Activated CD8-positive, alpha-beta T cell treated with anti-CD3 and anti-CD28 coated beads for 36 hours (primary cell): ENCODE measurements at regions of chr1 and their contacts with region 1.

Region 1: GRCh38 chr1:37486680-37487618 is 12.6 kb downstream of the ZC3H12A start:
- DNase-seq: peak; percentile 85
- ATAC-seq: peak; percentile 88
- H3K4me3 Mint-ChIP-seq: no peak overlapping the region
- H3K27ac Mint-ChIP-seq: peak overlapping the region; percentile 75
- H3K4me1 Mint-ChIP-seq: peaks cover 17% of the 10 kb centered on the region
- H3K27me3 Mint-ChIP-seq: no peaks in the 10 kb centered on the region
- CTCF ChIP-seq: peak; percentile 99

Region 2: DNA sequence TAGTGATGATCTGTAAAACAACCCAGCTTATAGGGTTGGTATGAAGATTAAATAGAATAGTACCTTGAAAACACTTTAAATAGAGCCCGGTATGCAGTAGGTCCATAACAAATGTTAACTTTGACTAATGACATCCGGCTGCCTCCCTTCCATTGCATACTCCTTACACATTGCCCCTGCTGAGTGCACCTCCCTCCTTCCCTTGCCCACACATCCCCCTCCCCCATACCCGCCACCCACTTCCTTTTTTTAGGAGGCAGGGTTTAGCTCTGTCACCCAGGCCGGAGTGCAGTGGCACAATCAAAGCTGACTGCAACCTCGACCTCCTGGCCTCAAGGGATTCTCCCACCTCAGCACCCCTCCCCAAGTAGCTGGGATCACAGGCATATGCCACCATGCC is 37.0 kb before region 1 on chr1:
- CTCF ChIA-PET with region 1: interaction called, 380 read pairs
- POLR2A ChIA-PET with region 1: interaction called, 12 read pairs
- intact Hi-C with region 1: loop called (anchors 2 kb)
- DNase-seq: peak; percentile 69
- ATAC-seq: peak; percentile 73
- H3K4me3 Mint-ChIP-seq: no peak overlapping the region
- H3K27ac Mint-ChIP-seq: peak overlapping the region; percentile 5
- H3K4me1 Mint-ChIP-seq: peaks cover 11% of the 10 kb centered on the region
- H3K27me3 Mint-ChIP-seq: no peaks in the 10 kb centered on the region
- CTCF ChIP-seq: no peak

Region 3: DNA sequence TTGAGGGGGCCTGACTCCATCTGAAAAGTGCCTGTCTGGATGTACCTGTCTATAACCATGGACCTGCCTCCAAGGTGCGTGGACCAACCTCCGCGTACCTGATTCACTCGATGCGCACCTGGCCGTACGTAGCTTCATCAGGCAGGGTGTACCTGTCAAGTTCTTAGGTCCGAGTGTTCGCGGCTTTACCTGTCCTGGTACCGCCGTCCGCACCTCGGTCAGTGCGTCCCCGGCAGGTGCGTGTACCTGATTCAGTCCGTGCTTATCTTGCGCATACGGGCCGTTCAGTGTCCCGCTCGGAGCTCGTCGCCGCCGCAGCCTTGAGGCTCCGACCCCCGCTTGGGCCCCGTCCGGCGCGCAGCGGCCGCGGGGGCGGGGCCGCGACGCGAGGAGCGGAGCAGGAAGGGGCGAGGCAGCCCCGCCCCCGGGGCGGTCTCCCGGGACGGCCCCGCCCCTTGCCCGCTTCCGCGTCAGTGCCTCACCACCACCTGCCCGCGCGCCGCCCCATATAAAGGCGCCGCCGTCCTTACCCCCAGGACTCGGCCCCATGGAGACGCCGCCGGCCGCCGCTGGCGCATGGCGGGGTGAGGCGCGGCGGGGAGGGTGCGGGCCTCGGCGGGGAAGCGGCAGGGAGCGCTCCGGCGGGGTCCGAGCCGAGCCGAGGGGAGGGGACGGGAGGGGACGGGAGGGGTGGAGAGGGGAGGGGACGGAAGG is 12.7 kb before region 1 on chr1 and contains the start of gene ZC3H12A:
- CTCF ChIA-PET with region 1: interaction called, 112 read pairs
- POLR2A ChIA-PET with region 1: interaction called, 45 read pairs
- intact Hi-C with region 1: no loop called
- DNase-seq: peak; percentile 93
- ATAC-seq: peak; percentile 62
- H3K4me3 Mint-ChIP-seq: peak within 1 kb of the TSS; percentile 90
- H3K27ac Mint-ChIP-seq: peak within 1 kb of the TSS; percentile 99
- H3K4me1 Mint-ChIP-seq: peaks cover 37% of the 10 kb centered on the region
- H3K27me3 Mint-ChIP-seq: no peaks in the 10 kb centered on the region
- CTCF ChIP-seq: no peak
- total RNA-seq, gene ZC3H12A: 20.4 to 20.5 TPM

Region 4: GRCh38 chr1:37509181-37509580 is 22.2 kb after region 1 on chr1:
- CTCF ChIA-PET with region 1: interaction called, 37 read pairs
- POLR2A ChIA-PET with region 1: interaction called, 5 read pairs
- intact Hi-C with region 1: no loop called
- DNase-seq: no peak
- ATAC-seq: no peak
- H3K4me3 Mint-ChIP-seq: no peak overlapping the region
- H3K27ac Mint-ChIP-seq: peak overlapping the region; percentile 22
- H3K4me1 Mint-ChIP-seq: peaks cover 36% of the 10 kb centered on the region
- H3K27me3 Mint-ChIP-seq: no peaks in the 10 kb centered on the region
- CTCF ChIP-seq: no peak

Region 5: GRCh38 chr1:37682334-37682987 is 195.5 kb after region 1 on chr1:
- CTCF ChIA-PET with region 1: interaction called, 10 read pairs
- POLR2A ChIA-PET with region 1: interaction called, 4 read pairs
- intact Hi-C with region 1: no loop called
- DNase-seq: peak; percentile 90
- ATAC-seq: peak; percentile 80
- H3K4me3 Mint-ChIP-seq: no peak overlapping the region
- H3K27ac Mint-ChIP-seq: peak overlapping the region; percentile 63
- H3K4me1 Mint-ChIP-seq: peaks cover 8% of the 10 kb centered on the region
- H3K27me3 Mint-ChIP-seq: no peaks in the 10 kb centered on the region
- CTCF ChIP-seq: peak; percentile 90